Activated T-helper 2 cell treated with anti-CD3 and anti-CD28 coated beads, Interferon-gamma antibody, Interleukin-2, Interleukin-4, amounts not matched to agents 10 μg/mL and 5 μg/mL and 100 μg/mL, durations not matched to agents 14 hours and 24 hours and 36 hours (primary cell): ENCODE measurements at regions of chr18 and their contacts with region 1.

Region 1: DNA sequence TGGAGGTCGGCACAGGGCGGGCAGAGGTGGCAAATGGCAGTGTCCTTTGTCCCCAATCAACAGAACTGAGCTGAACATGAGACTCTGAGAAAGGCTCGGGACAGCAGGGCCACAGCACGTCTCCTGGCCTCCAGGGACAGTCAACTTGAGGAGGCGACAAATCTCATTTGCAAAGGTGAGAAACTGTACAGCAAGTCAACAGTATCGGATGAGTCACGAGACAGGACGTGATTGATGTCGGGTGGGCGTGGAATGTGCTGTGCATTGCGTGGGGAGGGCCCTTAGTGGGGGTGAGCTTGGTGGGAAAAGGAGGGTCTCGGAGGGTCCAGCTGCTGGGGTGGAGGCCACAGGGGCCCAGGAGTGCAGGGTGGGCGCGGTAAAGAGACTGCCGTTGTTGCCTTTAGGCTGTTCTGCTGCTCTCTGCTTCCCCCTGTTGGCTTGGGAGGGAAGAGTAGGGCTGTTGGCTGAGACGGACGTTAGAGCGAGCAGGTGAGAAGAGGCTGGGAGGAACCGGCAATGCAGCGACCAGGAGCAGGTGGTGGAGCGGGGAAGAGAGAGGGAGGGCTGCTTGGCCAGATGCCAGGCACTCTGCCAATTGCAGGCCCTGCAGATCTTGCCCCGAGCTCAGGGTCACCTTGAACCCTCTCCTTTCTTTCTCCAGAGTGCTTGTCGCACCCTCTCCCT is 164.3 kb downstream of the BCL2 start:
- DNase-seq: peak; percentile 75
- H3K4me3 Mint-ChIP-seq: peak overlapping the region; percentile 71
- H3K27ac Mint-ChIP-seq: peak overlapping the region; percentile 99
- H3K4me1 Mint-ChIP-seq: peaks cover 93% of the 10 kb centered on the region
- H3K27me3 Mint-ChIP-seq: no peaks in the 10 kb centered on the region

Region 2: GRCh38 chr18:62258616-62259015 is 896.7 kb before region 1 on chr18:
- intact Hi-C with region 1: no loop called
- DNase-seq: no peak
- H3K4me3 Mint-ChIP-seq: no peak overlapping the region
- H3K27ac Mint-ChIP-seq: no peak overlapping the region
- H3K4me1 Mint-ChIP-seq: no peaks in the 10 kb centered on the region
- H3K27me3 Mint-ChIP-seq: no peaks in the 10 kb centered on the region

Region 3: DNA sequence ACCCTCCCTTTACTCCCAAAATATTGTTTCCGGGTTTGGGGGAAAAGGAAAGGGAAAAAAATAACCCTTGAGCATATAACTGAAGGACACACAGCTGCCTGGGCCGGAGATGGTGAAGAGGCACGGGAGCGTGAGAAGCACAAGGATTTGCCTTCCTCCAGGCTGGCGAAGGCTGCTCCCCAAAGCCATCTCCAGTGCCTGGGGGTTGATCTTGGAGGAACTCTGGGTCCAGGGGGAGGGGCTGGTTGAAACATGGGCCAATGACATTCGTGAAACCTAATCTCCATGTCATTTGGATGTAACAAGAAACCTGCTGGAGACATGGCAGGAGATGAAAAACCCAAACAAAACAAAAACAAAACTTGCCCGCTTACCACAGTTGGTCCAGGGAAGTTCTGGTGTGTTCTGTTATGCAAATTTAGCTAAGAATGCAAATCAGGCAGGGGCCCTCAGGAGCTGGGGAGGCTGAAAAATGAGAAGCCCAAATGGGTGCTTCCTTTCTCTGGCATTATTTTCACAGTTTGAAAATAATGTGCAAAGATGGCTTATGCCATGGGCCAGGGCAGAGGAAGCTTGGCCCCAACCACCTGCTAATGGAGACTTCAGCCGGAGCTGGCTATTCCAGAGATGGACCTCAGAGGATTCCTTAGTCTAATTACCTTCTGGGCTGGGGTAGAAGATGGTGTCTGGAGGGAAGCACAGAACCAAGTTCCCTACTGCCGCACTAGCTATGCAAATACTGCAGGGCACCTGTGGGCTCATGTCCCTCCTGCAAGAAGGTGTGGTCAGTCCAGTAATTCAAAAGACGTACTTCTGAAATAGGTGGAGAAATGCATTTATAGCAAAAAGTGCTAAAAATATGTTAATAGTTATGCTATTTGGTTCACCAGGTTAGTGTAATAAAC is 16.6 kb before region 1 on chr18:
- intact Hi-C with region 1: loop called (anchors 1 kb)
- DNase-seq: no peak
- H3K4me3 Mint-ChIP-seq: peak overlapping the region; percentile 72
- H3K27ac Mint-ChIP-seq: peak overlapping the region; percentile 83
- H3K4me1 Mint-ChIP-seq: peaks cover 46% of the 10 kb centered on the region
- H3K27me3 Mint-ChIP-seq: no peaks in the 10 kb centered on the region

Region 4: GRCh38 chr18:63199743-63200241 is 44.5 kb after region 1 on chr18:
- intact Hi-C with region 1: loop called (anchors 1 kb)
- DNase-seq: peak; percentile 56
- H3K4me3 Mint-ChIP-seq: no peak overlapping the region
- H3K27ac Mint-ChIP-seq: no peak overlapping the region
- H3K4me1 Mint-ChIP-seq: peaks cover 30% of the 10 kb centered on the region
- H3K27me3 Mint-ChIP-seq: no peaks in the 10 kb centered on the region

Region 5: GRCh38 chr18:63207143-63207790 is 52.0 kb after region 1 on chr18:
- intact Hi-C with region 1: loop called (anchors 1 kb)
- DNase-seq: no peak
- H3K4me3 Mint-ChIP-seq: peak overlapping the region; percentile 87
- H3K27ac Mint-ChIP-seq: peak overlapping the region; percentile 87
- H3K4me1 Mint-ChIP-seq: peaks cover 81% of the 10 kb centered on the region
- H3K27me3 Mint-ChIP-seq: no peaks in the 10 kb centered on the region

Region 6: GRCh38 chr18:63299837-63300745 is 144.8 kb after region 1 on chr18:
- intact Hi-C with region 1: loop called (anchors 1 kb)
- DNase-seq: no peak
- H3K4me3 Mint-ChIP-seq: peak overlapping the region; percentile 61
- H3K27ac Mint-ChIP-seq: peak overlapping the region; percentile 94
- H3K4me1 Mint-ChIP-seq: peaks cover 79% of the 10 kb centered on the region
- H3K27me3 Mint-ChIP-seq: no peaks in the 10 kb centered on the region

Region 7: GRCh38 chr18:63367053-63367953 is 212.0 kb after region 1 on chr18 and contains the start of gene KDSR:
- intact Hi-C with region 1: loop called (anchors 2 kb)
- DNase-seq: peak; percentile 82
- H3K4me3 Mint-ChIP-seq: peak within 1 kb of the TSS; percentile 94
- H3K27ac Mint-ChIP-seq: peak within 1 kb of the TSS; percentile 84
- H3K4me1 Mint-ChIP-seq: peaks cover 28% of the 10 kb centered on the region
- H3K27me3 Mint-ChIP-seq: no peaks in the 10 kb centered on the region
- total RNA-seq, gene KDSR: 73.3 and 76.1 TPM in 2 replicates